Left ventricle myocardium superior (tissue), 1 donor: ENCODE measurements at regions of chr2 and their contacts with region 1.

Region 1: GRCh38 chr2:70923378-70924015 is 12.2 kb upstream of the ATP6V1B1 start:
- DNase-seq: no peak
- ATAC-seq: no peak

Region 2: GRCh38 chr2:70861777-70862625 is 61.5 kb before region 1 on chr2:
- intact Hi-C with region 1: loop called (anchors 2 kb)
- DNase-seq: peak; percentile 84
- ATAC-seq: peak; percentile 91

Region 3: GRCh38 chr2:70965506-70965905 is 42.0 kb after region 1 on chr2:
- intact Hi-C with region 1: no loop called
- DNase-seq: no peak
- ATAC-seq: no peak